ENCODE measurements at regions of chr13 and their contacts with region 1.

Region 1: DNA sequence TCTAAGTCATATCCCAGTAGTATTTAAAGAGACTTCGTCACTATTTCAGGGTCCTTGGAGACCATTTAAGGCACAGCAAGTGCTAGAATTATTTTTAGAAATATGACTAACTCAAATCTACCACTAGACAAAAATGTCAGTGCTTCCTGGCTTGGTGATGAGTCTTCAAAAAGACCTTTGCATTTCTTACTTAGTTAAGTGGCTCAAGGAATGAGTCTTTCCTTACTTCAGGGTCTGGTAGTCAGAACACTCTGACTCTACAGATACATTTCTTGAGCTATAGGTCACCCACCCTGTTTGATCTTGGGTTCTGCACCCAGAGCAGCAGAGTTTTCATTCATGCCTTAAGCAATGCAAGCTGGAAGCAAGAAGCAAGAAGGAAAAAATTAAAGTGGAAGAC is 191.0 kb upstream of the HTR2A start:
- DNase-seq: no peak
- H3K4me3 ChIP-seq: no peak overlapping the region
- H3K27ac ChIP-seq: peak overlapping the region; percentile 70 to 73
- H3K4me1 ChIP-seq: peaks cover 0 to 58% (median 10%) of the 10 kb centered on the region in 4 donors
- H3K27me3 ChIP-seq: no peaks in the 10 kb centered on the region
- CTCF ChIP-seq: no peak

Region 2: GRCh38 chr13:46796515-46797474 is 291.0 kb before region 1 on chr13 and contains the start of gene ESD:
- intact Hi-C with region 1: loop called (anchors 10 kb)
- DNase-seq: peak; percentile 94 to 96
- H3K4me3 ChIP-seq: peak within 1 kb of the TSS; percentile 76 to 80
- H3K27ac ChIP-seq: peak within 1 kb of the TSS; percentile 93 to 96
- H3K4me1 ChIP-seq: peaks cover 0 to 55% (median 27%) of the 10 kb centered on the region in 4 donors
- H3K27me3 ChIP-seq: no peaks in the 10 kb centered on the region
- CTCF ChIP-seq: no peak

Region 3: DNA sequence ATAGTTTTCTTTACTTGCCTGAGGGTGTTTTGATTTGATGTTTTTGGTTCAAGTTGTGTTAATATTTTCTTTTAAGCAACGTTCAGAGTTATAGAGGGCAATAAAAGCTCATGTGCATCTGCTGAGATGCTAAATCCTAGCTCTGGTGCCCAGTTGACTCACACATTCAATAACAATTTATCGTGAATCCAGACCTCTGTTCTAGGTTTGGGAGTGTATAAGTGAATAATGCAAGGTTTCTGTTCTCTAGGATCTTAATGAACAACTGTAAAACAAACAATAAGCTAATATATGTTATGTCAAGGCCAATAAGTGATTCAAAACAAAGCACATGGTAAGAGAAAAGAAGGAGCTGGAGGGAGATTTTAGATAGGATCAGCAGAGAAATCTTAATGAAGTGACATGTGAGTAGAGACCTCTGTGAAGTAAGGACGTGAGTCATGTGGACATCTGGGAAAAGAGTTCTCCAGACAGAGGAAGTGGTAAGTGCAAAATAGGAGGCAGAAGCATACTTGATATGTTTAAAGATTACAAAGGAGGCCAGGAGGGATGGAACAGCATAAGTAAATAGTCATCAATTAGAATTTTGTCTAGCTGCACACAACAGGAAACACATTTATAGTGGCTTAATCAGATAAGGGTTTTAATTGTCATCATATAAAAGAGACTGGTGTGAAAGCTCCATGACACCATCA is 87.5 kb after region 1 on chr13:
- intact Hi-C with region 1: loop called (anchors 5 kb)
- DNase-seq: no peak
- H3K4me3 ChIP-seq: no peak overlapping the region
- H3K27ac ChIP-seq: no peak overlapping the region
- H3K4me1 ChIP-seq: peaks cover 0 to 12% (median 1%) of the 10 kb centered on the region in 4 donors
- H3K27me3 ChIP-seq: no peaks in the 10 kb centered on the region
- CTCF ChIP-seq: no peak

Measured in tibial artery (tissue), 4 donors.